Caco-2 (cell line): ENCODE measurements at regions of chr6 and their contacts with region 1.

Region 1: DNA sequence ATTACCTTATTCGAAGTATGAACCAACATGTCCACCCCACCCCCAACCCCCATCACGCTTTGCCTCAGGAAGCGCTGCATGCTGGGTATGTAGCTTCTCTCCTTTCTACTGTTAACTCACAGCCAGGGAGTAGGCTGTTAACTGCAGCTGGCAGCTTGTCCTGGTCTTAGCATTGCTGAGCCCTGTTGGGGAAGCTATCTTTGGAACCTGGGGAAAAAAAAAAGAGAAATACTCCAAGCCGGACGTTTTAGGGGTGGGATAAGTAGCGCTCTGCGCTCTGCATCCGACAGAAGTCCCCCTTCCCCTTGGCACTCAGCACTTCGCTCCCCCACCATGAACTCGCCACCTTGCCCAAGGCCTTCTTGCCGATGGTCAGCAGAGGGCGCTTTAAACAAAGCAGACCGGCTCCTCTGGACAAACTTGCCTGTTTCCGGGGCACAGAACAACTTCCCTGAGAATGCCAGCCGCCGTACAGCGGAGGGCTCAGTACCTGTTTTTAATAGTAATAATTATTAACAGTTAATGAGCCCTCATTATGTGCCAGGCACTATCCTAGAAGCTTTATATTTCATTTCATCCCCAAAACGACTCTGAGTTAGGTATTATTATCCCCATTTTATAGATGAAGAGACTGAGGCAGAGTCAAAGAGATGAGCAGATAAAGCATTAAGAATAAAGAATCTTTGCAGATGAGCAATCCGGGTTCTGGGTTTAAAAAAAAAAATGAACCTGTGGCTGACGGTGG is 35.2 kb upstream of the MDFI start:
- DNase-seq: peak; percentile 87 to 88
- H3K4me3 ChIP-seq: no peak overlapping the region
- H3K4me3 Mint-ChIP-seq: peak overlapping the region; percentile 69
- H3K27ac Mint-ChIP-seq: peak overlapping the region; percentile 73
- H3K4me1 ChIP-seq: no peaks in the 10 kb centered on the region
- H3K4me1 Mint-ChIP-seq: peaks cover 19% of the 10 kb centered on the region
- H3K27me3 ChIP-seq: no peaks in the 10 kb centered on the region
- H3K27me3 Mint-ChIP-seq: no peaks in the 10 kb centered on the region
- CTCF ChIP-seq: peak; percentile 80 to 93

Region 2: DNA sequence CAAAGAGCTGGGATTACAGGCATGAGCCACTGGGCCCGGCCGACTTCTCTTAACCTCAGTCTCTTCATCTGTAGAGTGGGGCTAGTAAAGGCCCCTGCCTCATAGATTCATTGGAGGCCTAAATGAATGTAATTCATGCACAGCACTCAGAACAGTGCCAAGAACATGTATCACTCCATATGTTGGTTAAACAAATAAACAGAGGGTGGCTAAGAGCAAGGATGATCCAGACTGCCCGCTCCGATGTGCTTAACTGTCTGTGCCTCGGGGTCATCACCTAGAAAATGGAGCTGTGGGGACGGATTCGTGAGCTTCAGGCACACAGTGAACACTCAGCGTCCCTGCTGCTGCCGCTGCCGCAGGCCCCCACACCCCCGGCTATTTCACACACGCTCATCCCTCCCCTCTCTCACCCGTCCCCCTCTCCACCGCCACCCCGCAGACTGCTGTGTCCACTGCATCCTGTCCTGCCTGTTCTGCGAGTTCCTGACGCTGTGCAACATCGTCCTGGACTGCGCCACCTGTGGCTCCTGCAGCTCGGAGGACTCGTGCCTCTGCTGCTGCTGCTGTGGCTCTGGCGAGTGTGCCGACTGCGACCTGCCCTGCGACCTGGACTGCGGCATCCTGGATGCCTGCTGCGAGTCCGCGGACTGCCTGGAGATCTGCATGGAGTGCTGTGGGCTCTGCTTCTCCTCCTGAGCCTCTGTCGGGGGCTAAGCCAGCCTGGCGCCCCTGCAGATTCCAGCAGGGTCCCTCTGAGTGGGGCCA is 50.0 kb after region 1 on chr6:
- CTCF ChIA-PET with region 1: interaction called, 5 read pairs
- POLR2A ChIA-PET with region 1: no interaction called
- intact Hi-C with region 1: loop called (anchors 5 kb)
- DNase-seq: peak; percentile 76 to 81
- H3K4me3 ChIP-seq: no peak overlapping the region
- H3K4me3 Mint-ChIP-seq: peak overlapping the region; percentile 49
- H3K27ac Mint-ChIP-seq: peak overlapping the region; percentile 71
- H3K4me1 ChIP-seq: peaks cover 9% of the 10 kb centered on the region
- H3K4me1 Mint-ChIP-seq: peaks cover 13% of the 10 kb centered on the region
- H3K27me3 ChIP-seq: no peaks in the 10 kb centered on the region
- H3K27me3 Mint-ChIP-seq: no peaks in the 10 kb centered on the region
- CTCF ChIP-seq: peak in 1 of 2 experiments; percentile 30